Common myeloid progenitor, CD34-positive (primary cell): ENCODE measurements at regions of chr9 and their contacts with region 1.

Region 1: GRCh38 chr9:113737517-113738271 is 138.4 kb upstream of the ZNF618 start:
- DNase-seq: peak; percentile 56 to 76 (median 75)
- H3K4me3 ChIP-seq: no peak overlapping the region
- H3K27ac ChIP-seq: no peak overlapping the region
- H3K4me1 ChIP-seq: peaks cover 0 to 4% (median 3%) of the 10 kb centered on the region in 4 experiments
- H3K27me3 ChIP-seq: peaks cover 0 to 3% (median 0%) of the 10 kb centered on the region in 5 experiments

Region 2: DNA sequence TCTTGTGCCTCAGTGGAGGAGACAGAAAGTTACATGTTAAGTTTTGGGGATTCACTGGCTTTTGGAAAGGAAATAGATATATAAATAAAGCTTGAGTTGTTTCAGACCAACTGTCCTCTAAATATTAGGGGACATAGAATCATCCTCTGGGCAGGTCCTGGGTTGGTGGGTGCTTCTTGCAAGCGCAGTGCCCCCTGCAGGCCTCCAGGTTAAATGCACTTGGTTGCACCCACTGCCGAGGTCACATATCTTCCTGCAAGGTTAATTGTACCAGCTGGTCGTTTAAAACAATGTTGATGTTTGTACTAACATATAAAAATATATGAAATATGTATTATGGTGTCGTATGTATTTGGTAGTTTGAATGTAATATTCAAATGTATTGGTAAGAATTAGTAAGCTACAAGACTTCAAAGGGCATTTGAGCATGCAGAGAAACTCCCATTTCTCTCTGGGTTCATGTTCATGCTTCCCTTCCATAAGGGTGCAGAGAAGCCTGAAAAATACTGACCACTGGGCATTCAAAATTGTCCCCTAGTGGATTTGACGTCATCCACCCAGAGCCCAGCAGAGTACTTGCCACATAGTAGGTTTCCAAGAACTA is 225.4 kb after region 1 on chr9:
- CTCF ChIA-PET with region 1: interaction called, 18 read pairs
- POLR2A ChIA-PET with region 1: no interaction called
- DNase-seq: peak; percentile 52 to 73 (median 73)
- H3K4me3 ChIP-seq: no peak overlapping the region
- H3K27ac ChIP-seq: no peak overlapping the region
- H3K4me1 ChIP-seq: no peaks in the 10 kb centered on the region
- H3K27me3 ChIP-seq: no peaks in the 10 kb centered on the region